K562 (cell line): ENCODE measurements at regions of chr11 and their contacts with region 1.

Region 1: DNA sequence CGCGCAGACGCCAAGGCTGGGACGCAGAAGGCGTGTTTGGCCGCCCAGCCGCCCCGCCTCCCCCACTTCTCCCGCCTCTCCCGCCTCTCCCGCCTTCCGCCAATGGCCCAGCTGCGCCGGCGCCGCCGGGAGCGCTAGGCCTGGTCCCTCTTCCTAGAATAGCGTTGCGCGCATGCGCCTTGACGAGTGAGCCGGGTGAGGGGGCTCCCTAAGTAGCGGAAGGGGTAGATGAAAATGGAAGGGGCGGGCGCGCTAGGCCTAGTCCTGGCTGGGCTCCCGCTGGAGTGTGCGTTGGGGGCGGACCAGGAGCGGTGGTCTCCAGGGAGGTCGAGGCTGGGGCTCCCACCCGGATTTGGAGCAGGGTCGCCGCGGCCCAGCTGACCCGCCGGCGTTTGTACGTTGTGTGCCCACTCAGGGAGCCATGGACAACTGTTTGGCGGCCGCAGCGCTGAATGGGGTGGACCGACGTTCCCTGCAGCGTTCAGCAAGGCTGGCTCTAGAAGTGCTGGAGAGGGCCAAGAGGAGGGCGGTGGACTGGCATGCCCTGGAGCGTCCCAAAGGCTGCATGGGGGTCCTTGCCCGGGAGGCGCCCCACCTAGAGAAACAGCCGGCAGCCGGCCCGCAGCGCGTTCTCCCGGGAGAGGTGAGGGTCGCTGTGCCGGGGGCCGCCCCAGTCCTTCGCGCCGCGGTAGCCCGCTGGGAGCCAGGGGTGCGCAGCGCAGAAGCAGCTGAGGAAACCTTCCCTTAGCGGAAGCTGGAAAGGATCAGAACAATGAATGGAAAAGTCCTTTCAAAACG is at the start of gene AKIP1:
- DNase-seq: peak; percentile 95 to 97 (median 97)
- ATAC-seq: peak; percentile 95
- H3K4me3 ChIP-seq: peak within 1 kb of the TSS; percentile 94
- H3K27ac ChIP-seq: peak within 1 kb of the TSS; percentile 79
- H3K4me1 ChIP-seq: peaks cover 15 to 29% of the 10 kb centered on the region in 2 experiments
- H3K27me3 ChIP-seq: no peaks in the 10 kb centered on the region
- CTCF ChIP-seq: no peak
- EP300 ChIP-seq: no peak
- POLR2A ChIP-seq: peak; percentile 80
- RAD21 ChIP-seq: no peak
- polyA plus RNA-seq, gene AKIP1: 9.0 to 15.1 TPM

Region 2: DNA sequence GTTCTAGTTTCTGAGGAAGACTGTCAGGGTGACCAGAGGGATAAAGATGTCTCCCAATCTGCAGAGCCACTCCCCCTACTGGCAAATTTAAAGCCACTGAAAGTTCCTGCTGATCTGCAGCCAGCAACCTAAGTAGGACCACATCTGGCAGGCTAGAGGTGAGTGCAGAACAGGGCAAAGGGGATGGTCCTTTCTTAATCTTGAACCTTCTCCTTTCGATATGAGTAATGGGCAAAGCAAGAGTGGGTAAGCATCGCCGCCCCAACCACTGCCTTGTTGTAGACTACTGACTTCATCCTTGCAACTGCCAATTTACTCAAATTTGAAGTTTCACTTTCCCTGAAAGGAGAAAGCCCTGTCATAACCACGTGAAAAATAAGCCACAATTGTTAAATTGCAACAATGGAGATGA is 149.5 kb after region 1 on chr11:
- CTCF ChIA-PET with region 1: no interaction called
- POLR2A ChIA-PET with region 1: no interaction called
- in situ Hi-C with region 1: no loop called
- intact Hi-C with region 1: loop called (anchors 5 kb)
- DNase-seq: peak; percentile 38 to 59 (median 50)
- ATAC-seq: peak; percentile 85
- H3K4me3 ChIP-seq: no peak overlapping the region
- H3K27ac ChIP-seq: no peak overlapping the region
- H3K4me1 ChIP-seq: no peaks in the 10 kb centered on the region; a peak in 2 of 5 replicates
- H3K27me3 ChIP-seq: peaks cover 8 to 24% of the 10 kb centered on the region in 2 experiments
- CTCF ChIP-seq: peak; percentile 46 to 60 (median 56)
- EP300 ChIP-seq: no peak
- POLR2A ChIP-seq: no peak
- RAD21 ChIP-seq: peak in 1 of 2 experiments; percentile 44; a peak in 2 of 4 replicates

Region 3: GRCh38 chr11:9137293-9138132 is 226.3 kb after region 1 on chr11:
- CTCF ChIA-PET with region 1: no interaction called
- POLR2A ChIA-PET with region 1: no interaction called
- in situ Hi-C with region 1: no loop called
- intact Hi-C with region 1: loop called (anchors 5 kb)
- DNase-seq: peak; percentile 74 to 79 (median 76)
- ATAC-seq: peak; percentile 99
- H3K4me3 ChIP-seq: no peak overlapping the region
- H3K27ac ChIP-seq: no peak overlapping the region
- H3K4me1 ChIP-seq: no peaks in the 10 kb centered on the region
- H3K27me3 ChIP-seq: no peaks in the 10 kb centered on the region
- CTCF ChIP-seq: peak; percentile 91 to 95 (median 94)
- EP300 ChIP-seq: peak; percentile 10; the same call in 1 of the 2 replicates
- POLR2A ChIP-seq: no peak
- RAD21 ChIP-seq: peak; percentile 84 to 92